ENCODE measurements at regions of chr15 and their contacts with region 1.

Region 1: DNA sequence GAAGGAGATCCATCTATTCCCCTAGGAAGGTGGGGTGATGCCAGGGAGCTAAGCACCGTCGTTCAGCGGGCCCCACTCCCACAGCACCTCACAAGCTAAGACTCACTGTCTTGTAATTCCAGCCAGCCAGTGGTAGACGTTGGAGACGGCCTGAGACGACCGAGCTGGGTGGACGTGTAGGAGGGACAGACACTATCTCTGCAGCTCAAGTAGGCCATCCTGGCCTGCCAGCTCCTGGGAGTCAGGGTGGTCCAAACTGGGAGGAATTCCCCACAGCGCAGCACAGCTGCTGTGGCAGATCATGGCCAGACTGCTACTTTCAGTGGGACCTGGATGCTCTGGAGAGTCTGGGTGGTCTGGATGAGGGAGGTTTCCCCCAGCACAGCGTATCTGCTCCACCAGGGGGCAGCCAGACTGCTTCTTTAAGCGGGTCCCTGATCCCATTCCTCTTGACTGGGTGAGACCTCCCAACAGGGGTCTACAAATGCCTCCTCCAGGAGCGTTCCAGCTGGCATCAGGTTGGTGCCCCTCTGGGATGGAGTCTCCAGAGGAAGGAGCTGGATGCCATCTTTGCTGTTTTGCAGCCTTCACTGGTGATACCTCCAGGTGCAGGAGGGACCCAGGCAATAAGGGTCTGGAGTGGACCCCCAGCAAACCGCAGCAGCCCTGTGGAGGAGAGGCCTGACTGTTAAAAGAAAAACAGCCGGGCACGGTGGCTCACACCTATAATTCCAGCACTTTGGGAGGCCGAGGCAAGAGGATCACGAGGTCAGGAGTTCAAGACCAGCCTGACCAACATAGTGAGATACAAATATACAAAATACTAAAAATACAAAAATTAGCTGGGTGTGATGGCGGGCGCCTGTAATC is 27.6 kb downstream of the GNB5 start:
- DNase-seq: peak; percentile 38
- ATAC-seq: no peak
- H3K4me3 ChIP-seq: no peak overlapping the region
- H3K4me3 Mint-ChIP-seq: no peak overlapping the region
- H3K27ac ChIP-seq: no peak overlapping the region
- H3K27ac Mint-ChIP-seq: no peak overlapping the region
- H3K4me1 ChIP-seq: peaks cover 11% of the 10 kb centered on the region in 2 donors
- H3K4me1 Mint-ChIP-seq: peaks cover 37% of the 10 kb centered on the region
- H3K27me3 ChIP-seq: no peaks in the 10 kb centered on the region
- H3K27me3 Mint-ChIP-seq: no peaks in the 10 kb centered on the region
- CTCF ChIP-seq: peak; percentile 35

Region 2: GRCh38 chr15:52078876-52079700 is 84.5 kb before region 1 on chr15:
- CTCF ChIA-PET with region 1: no interaction called
- POLR2A ChIA-PET with region 1: no interaction called
- intact Hi-C with region 1: no loop called
- DNase-seq: peak; percentile 81
- ATAC-seq: peak; percentile 64
- H3K4me3 ChIP-seq: no peak overlapping the region
- H3K4me3 Mint-ChIP-seq: no peak overlapping the region
- H3K27ac ChIP-seq: no peak overlapping the region
- H3K27ac Mint-ChIP-seq: no peak overlapping the region
- H3K4me1 ChIP-seq: peaks cover 11 to 14% of the 10 kb centered on the region in 2 donors
- H3K4me1 Mint-ChIP-seq: peaks cover 25% of the 10 kb centered on the region
- H3K27me3 ChIP-seq: peaks cover 0 to 9% (median 0%) of the 10 kb centered on the region in 4 experiments
- H3K27me3 Mint-ChIP-seq: peaks cover 6% of the 10 kb centered on the region
- CTCF ChIP-seq: peak; percentile 93

Region 3: GRCh38 chr15:52208306-52208946 is 44.9 kb after region 1 on chr15:
- CTCF ChIA-PET with region 1: interaction called, 15 read pairs
- POLR2A ChIA-PET with region 1: no interaction called
- intact Hi-C with region 1: loop called (anchors 1 kb)
- DNase-seq: peak; percentile 73
- ATAC-seq: peak; percentile 95
- H3K4me3 ChIP-seq: no peak overlapping the region
- H3K4me3 Mint-ChIP-seq: no peak overlapping the region
- H3K27ac ChIP-seq: no peak overlapping the region
- H3K27ac Mint-ChIP-seq: no peak overlapping the region
- H3K4me1 ChIP-seq: no peaks in the 10 kb centered on the region
- H3K4me1 Mint-ChIP-seq: no peaks in the 10 kb centered on the region
- H3K27me3 ChIP-seq: no peaks in the 10 kb centered on the region
- H3K27me3 Mint-ChIP-seq: no peaks in the 10 kb centered on the region
- CTCF ChIP-seq: peak; percentile 86

Region 4: GRCh38 chr15:52408823-52409222 is 245.3 kb after region 1 on chr15:
- CTCF ChIA-PET with region 1: no interaction called
- POLR2A ChIA-PET with region 1: no interaction called
- intact Hi-C with region 1: no loop called
- DNase-seq: no peak
- ATAC-seq: no peak
- H3K4me3 ChIP-seq: no peak overlapping the region
- H3K4me3 Mint-ChIP-seq: no peak overlapping the region
- H3K27ac ChIP-seq: no peak overlapping the region
- H3K27ac Mint-ChIP-seq: no peak overlapping the region
- H3K4me1 ChIP-seq: no peaks in the 10 kb centered on the region
- H3K4me1 Mint-ChIP-seq: no peaks in the 10 kb centered on the region
- H3K27me3 ChIP-seq: no peaks in the 10 kb centered on the region
- H3K27me3 Mint-ChIP-seq: no peaks in the 10 kb centered on the region
- CTCF ChIP-seq: no peak